Activated CD8-positive, alpha-beta memory T cell treated with anti-CD3 and anti-CD28 coated beads, Interleukin-2, amount 10 ng/mL, durations not matched to agents 7 days and 5 days (primary cell): ENCODE measurements at regions of chr19 and their contacts with region 1.

Region 1: DNA sequence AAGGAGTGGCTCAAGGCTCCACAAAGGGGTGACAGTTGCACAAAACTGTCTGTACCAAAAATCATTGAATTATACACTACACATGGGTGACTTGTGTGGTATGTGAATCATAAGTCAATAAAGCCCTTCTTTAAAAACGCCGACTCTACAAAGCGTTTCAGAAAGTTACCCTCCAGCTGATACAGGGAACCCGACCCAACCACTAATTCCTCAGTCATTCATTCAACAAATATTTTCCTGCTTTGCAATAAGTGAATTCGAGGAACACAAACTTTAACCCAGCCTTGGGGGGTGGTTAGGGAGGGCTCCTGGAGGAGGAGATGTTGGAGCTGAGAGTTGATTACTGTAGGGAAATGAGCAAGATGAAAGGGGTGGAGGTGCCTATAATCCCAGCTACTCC is 32.0 kb downstream of the LTBP4 start:
- DNase-seq: no peak
- ATAC-seq: no peak
- H3K4me3 Mint-ChIP-seq: no peak overlapping the region
- H3K27ac Mint-ChIP-seq: no peak overlapping the region
- H3K4me1 Mint-ChIP-seq: peaks cover 4% of the 10 kb centered on the region
- H3K27me3 Mint-ChIP-seq: peaks cover 13% of the 10 kb centered on the region

Region 2: GRCh38 chr19:40381321-40381720 is 251.9 kb before region 1 on chr19:
- CTCF ChIA-PET with region 1: no interaction called
- DNase-seq: no peak
- ATAC-seq: no peak
- H3K4me3 Mint-ChIP-seq: no peak overlapping the region
- H3K27ac Mint-ChIP-seq: no peak overlapping the region
- H3K4me1 Mint-ChIP-seq: peaks cover 7% of the 10 kb centered on the region
- H3K27me3 Mint-ChIP-seq: peaks cover 3% of the 10 kb centered on the region

Region 3: GRCh38 chr19:40465557-40466150 is 167.6 kb before region 1 on chr19 and contains the start of gene BLVRB:
- CTCF ChIA-PET with region 1: interaction called, 22 read pairs
- DNase-seq: peak; percentile 99
- ATAC-seq: peak; percentile 88
- H3K4me3 Mint-ChIP-seq: peak within 1 kb of the TSS; percentile 79
- H3K27ac Mint-ChIP-seq: peak within 1 kb of the TSS; percentile 85
- H3K4me1 Mint-ChIP-seq: peaks cover 34% of the 10 kb centered on the region
- H3K27me3 Mint-ChIP-seq: peaks cover 23% of the 10 kb centered on the region
- total RNA-seq, gene BLVRB: 12.9 to 23.3 TPM

Region 4: GRCh38 chr19:40542202-40542859 is 90.9 kb before region 1 on chr19:
- CTCF ChIA-PET with region 1: interaction called, 13 read pairs
- DNase-seq: no peak
- ATAC-seq: no peak
- H3K4me3 Mint-ChIP-seq: no peak overlapping the region
- H3K27ac Mint-ChIP-seq: no peak overlapping the region
- H3K4me1 Mint-ChIP-seq: no peaks in the 10 kb centered on the region
- H3K27me3 Mint-ChIP-seq: peaks cover 14% of the 10 kb centered on the region

Region 5: DNA sequence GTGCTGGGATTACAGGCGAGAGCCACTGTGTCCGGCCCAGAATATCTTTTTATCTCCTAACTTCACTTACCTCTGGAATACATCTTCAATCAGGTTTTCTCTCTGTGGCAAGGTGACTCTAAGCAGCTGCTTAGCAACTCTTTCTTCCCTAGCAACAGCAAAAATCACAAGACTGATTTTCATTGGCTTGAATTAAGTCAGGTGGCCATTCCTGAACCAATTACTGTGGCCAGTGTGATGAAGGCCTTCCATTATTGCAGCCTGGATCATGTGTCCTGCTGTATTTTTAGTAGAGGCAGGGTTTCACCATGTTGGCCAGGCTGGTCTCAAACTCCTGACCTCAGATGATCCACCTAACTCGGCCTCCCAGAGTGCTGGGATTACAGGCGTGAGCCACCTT is 41.0 kb before region 1 on chr19:
- CTCF ChIA-PET with region 1: interaction called, 17 read pairs
- DNase-seq: no peak
- ATAC-seq: peak; percentile 73
- H3K4me3 Mint-ChIP-seq: no peak overlapping the region
- H3K27ac Mint-ChIP-seq: no peak overlapping the region
- H3K4me1 Mint-ChIP-seq: peaks cover 14% of the 10 kb centered on the region
- H3K27me3 Mint-ChIP-seq: peaks cover 11% of the 10 kb centered on the region

Region 6: DNA sequence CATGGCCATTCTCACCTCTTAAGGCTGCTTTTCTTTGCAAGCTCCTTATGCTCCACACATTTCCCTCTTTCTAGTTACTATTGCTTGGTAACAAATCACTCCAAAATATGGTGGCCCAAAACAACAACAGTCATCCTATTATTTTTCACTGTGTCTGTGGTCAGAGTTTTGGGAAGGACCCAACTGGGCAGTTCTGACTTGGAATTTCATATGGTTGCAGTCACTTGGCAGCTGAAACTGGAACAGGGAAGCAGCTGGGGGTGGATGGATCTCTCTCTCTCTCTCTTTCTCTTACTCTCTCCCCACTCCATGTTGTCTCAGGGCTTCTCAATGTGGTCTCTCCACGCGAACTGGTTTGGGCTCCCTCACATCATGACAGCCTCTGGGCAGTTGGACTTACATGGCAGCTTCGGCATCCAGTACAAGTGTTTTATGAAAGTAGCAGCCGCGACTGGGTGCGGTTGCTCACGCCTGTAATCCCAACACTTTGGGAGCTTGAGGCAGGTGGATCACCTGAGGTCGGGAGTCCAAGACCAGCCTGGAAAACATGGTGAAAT is 17.6 kb after region 1 on chr19:
- CTCF ChIA-PET with region 1: interaction called, 52 read pairs
- DNase-seq: no peak
- ATAC-seq: no peak
- H3K4me3 Mint-ChIP-seq: no peak overlapping the region
- H3K27ac Mint-ChIP-seq: no peak overlapping the region
- H3K4me1 Mint-ChIP-seq: peaks cover 3% of the 10 kb centered on the region
- H3K27me3 Mint-ChIP-seq: peaks cover 4% of the 10 kb centered on the region

Region 7: DNA sequence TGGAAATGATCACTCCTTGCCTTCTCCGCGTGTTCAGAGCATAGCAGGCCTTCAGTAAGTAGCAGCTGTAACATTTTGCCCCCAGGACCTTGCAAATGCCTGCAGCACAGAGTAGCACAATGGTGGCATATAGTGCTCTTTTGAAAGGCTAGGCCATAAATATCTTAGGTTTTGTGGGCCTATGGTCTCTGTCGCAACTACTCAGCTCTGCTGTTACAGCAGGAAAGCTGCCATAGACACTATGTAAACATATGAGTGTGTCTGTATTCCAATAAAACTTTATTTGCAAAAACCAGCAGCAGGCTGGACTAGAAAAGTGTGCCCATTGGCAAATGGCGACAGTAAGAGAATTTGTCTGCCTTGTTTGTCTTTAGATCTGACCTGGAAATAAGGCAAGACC is 93.1 kb after region 1 on chr19:
- CTCF ChIA-PET with region 1: no interaction called
- DNase-seq: no peak
- ATAC-seq: no peak
- H3K4me3 Mint-ChIP-seq: no peak overlapping the region
- H3K27ac Mint-ChIP-seq: no peak overlapping the region
- H3K4me1 Mint-ChIP-seq: peaks cover 16% of the 10 kb centered on the region
- H3K27me3 Mint-ChIP-seq: no peaks in the 10 kb centered on the region

Region 8: GRCh38 chr19:40785526-40785925 is 152.3 kb after region 1 on chr19:
- CTCF ChIA-PET with region 1: no interaction called
- DNase-seq: no peak
- ATAC-seq: no peak
- H3K4me3 Mint-ChIP-seq: no peak overlapping the region
- H3K27ac Mint-ChIP-seq: peak overlapping the region; percentile 41
- H3K4me1 Mint-ChIP-seq: peaks cover 9% of the 10 kb centered on the region
- H3K27me3 Mint-ChIP-seq: no peaks in the 10 kb centered on the region